Activated CD4-positive, alpha-beta T cell treated with anti-CD3 and anti-CD28 coated beads, Interleukin-2, amount 10 ng/mL, durations not matched to agents 24 days and 14 days (primary cell): ENCODE measurements at regions of chr13 and their contacts with region 1.

Region 1: GRCh38 chr13:72839831-72840426 is 58.0 kb downstream of the PIBF1 start:
- DNase-seq: peak; percentile 79
- H3K4me3 Mint-ChIP-seq: no peak overlapping the region
- H3K27ac Mint-ChIP-seq: no peak overlapping the region
- H3K4me1 Mint-ChIP-seq: peaks cover 4% of the 10 kb centered on the region
- H3K27me3 Mint-ChIP-seq: no peaks in the 10 kb centered on the region

Region 2: GRCh38 chr13:72104656-72105180 is 735.2 kb before region 1 on chr13:
- intact Hi-C with region 1: no loop called
- DNase-seq: no peak
- H3K4me3 Mint-ChIP-seq: no peak overlapping the region
- H3K27ac Mint-ChIP-seq: no peak overlapping the region
- H3K4me1 Mint-ChIP-seq: no peaks in the 10 kb centered on the region
- H3K27me3 Mint-ChIP-seq: no peaks in the 10 kb centered on the region

Region 3: GRCh38 chr13:72920097-72920496 is 80.2 kb after region 1 on chr13:
- intact Hi-C with region 1: no loop called
- DNase-seq: no peak
- H3K4me3 Mint-ChIP-seq: no peak overlapping the region
- H3K27ac Mint-ChIP-seq: no peak overlapping the region
- H3K4me1 Mint-ChIP-seq: peaks cover 4% of the 10 kb centered on the region
- H3K27me3 Mint-ChIP-seq: no peaks in the 10 kb centered on the region

Region 4: DNA sequence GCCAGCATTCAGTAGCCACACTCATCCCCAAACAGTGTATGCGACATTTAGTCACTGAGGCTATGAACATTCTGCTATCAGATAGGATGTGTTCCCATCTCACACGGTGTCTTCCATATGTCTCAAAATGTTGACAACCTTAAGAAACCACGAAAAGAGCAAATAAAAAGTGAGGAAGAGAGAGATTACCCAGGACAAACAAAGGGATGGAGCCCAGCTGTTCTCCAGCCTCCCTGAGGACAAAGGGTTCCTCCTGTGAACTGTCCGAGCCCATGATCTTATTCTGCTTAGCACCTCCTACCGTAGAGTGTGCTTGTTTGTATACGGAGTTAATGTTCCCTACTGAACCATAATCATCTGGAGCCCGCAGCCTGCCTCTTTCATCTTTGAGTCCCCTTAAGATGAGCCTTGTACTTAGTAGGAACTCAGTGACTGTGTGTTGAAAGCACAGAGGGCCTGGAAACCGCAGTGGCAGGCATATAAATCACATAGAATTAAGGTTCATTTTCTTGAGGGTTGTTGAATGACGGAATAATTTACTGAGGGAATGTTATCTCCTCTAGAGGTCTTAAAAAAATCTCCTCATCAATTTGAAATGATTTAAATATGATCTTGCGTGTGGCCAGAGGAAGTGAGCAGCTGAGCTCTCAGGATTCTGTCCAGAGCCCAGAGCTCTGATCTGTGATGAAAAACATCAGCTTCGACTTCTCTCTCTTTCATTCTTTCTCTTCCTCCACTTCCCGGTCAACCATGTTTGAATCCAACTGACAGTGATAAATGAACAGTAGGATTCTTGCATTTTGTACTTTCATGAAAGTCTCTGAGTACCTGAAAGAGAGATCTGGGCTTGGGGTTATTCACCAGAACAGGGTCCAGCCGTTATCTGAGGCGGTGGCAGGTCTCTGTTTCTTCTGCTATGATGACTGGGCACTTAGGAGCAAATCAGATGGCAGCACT is 419.4 kb after region 1 on chr13:
- intact Hi-C with region 1: no loop called
- DNase-seq: no peak
- H3K4me3 Mint-ChIP-seq: no peak overlapping the region
- H3K27ac Mint-ChIP-seq: no peak overlapping the region
- H3K4me1 Mint-ChIP-seq: peaks cover 6% of the 10 kb centered on the region
- H3K27me3 Mint-ChIP-seq: peaks cover 3% of the 10 kb centered on the region

Region 5: DNA sequence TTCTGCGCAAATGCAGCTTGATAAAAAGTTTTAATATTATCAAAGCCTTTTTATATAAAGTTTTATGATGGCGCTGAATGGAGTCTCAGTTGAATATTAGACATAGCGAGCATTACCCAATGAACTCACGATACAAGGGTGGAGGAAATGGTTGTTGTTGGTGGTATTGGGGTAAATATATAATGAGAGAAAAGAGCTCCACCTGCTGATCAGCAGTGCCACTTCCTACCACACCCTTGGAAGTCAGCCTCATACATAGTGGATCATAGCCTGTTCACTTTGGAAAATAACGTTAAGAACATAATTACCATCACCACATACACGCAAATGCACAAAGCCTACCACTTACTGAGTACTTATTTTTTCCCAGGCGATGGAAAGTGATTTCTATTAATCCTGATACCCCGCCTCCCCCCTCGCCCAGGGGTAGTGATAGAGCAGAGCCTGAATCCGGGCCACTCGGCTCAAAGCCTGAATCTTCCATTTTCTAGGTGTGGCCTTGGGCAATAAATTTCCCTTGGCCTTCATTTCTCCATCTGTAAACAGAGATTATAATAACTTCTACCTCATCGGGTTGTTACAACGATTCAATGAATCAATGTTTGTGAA is 577.2 kb after region 1 on chr13:
- intact Hi-C with region 1: loop called (anchors 5 kb)
- DNase-seq: no peak
- H3K4me3 Mint-ChIP-seq: no peak overlapping the region
- H3K27ac Mint-ChIP-seq: no peak overlapping the region
- H3K4me1 Mint-ChIP-seq: no peaks in the 10 kb centered on the region
- H3K27me3 Mint-ChIP-seq: peaks cover 4% of the 10 kb centered on the region